ENCODE measurements at regions of chr12 and their contacts with region 1.

Region 1: DNA sequence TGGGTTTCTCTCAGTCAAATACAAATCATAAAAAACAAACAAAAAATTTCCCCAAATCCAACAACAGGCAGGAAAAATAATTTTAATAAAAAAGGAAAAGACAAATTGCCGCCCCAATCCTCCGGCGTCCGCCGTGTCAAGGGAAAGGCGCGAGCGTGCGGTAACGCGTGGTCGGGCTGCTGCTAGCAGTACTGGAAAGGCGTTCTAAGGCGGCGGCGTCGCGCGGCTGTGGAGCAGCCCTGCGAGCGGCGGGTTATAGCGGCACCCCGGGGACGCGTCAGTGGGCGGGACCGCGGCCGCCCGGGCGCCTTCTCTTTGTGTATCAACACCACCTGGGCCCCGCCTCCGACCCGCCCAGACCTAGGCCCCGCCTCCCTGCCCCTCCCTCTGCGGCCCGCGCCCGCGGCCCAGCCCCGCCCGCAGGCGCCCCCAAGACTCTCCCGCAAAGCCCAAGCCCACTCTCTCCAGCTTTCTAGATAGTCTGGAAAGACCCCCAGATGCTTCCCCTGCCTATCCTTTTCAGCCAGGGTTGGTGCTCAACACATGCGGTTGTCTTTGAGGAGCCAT is at the start of gene SLC38A2:
- DNase-seq: peak; percentile 97
- ATAC-seq: peak; percentile 81 to 96 (median 81)
- H3K4me3 ChIP-seq: peak within 1 kb of the TSS; percentile 100
- H3K4me3 Mint-ChIP-seq: peak within 1 kb of the TSS; percentile 100
- H3K27ac ChIP-seq: peak within 1 kb of the TSS; percentile 96
- H3K27ac Mint-ChIP-seq: peak within 1 kb of the TSS; percentile 99
- H3K4me1 ChIP-seq: peaks cover 27% of the 10 kb centered on the region
- H3K4me1 Mint-ChIP-seq: peaks cover 65 to 66% of the 10 kb centered on the region in 2 donors
- H3K27me3 ChIP-seq: no peaks in the 10 kb centered on the region
- H3K27me3 Mint-ChIP-seq: no peaks in the 10 kb centered on the region
- CTCF ChIP-seq: no peak
- total RNA-seq, gene SLC38A2: 131 to 241 (median 167) TPM

Region 2: GRCh38 chr12:45728630-45729232 is 643.9 kb before region 1 on chr12:
- intact Hi-C with region 1: loop called (anchors 5 kb)
- DNase-seq: peak; percentile 96 to 98
- ATAC-seq: peak; percentile 67 to 89 (median 72)
- H3K4me3 ChIP-seq: peak overlapping the region; percentile 88
- H3K4me3 Mint-ChIP-seq: peak overlapping the region; percentile 100
- H3K27ac ChIP-seq: peak overlapping the region; percentile 96
- H3K27ac Mint-ChIP-seq: peak overlapping the region; percentile 100
- H3K4me1 ChIP-seq: peaks cover 10% of the 10 kb centered on the region
- H3K4me1 Mint-ChIP-seq: peaks cover 50 to 61% of the 10 kb centered on the region in 2 donors
- H3K27me3 ChIP-seq: no peaks in the 10 kb centered on the region
- H3K27me3 Mint-ChIP-seq: no peaks in the 10 kb centered on the region
- CTCF ChIP-seq: peak; percentile 88

Region 3: GRCh38 chr12:46217541-46218321 is 154.9 kb before region 1 on chr12:
- intact Hi-C with region 1: loop called (anchors 1 kb)
- DNase-seq: peak; percentile 57 to 85
- ATAC-seq: peak; percentile 11 to 55 (median 32)
- H3K4me3 ChIP-seq: peak overlapping the region; percentile 8
- H3K4me3 Mint-ChIP-seq: peak overlapping the region; percentile 85
- H3K27ac ChIP-seq: peak overlapping the region; percentile 87
- H3K27ac Mint-ChIP-seq: peak overlapping the region; percentile 97 to 98
- H3K4me1 ChIP-seq: peaks cover 54% of the 10 kb centered on the region
- H3K4me1 Mint-ChIP-seq: peaks cover 90 to 97% of the 10 kb centered on the region in 2 donors
- H3K27me3 ChIP-seq: no peaks in the 10 kb centered on the region
- H3K27me3 Mint-ChIP-seq: no peaks in the 10 kb centered on the region
- CTCF ChIP-seq: no peak

Region 4: DNA sequence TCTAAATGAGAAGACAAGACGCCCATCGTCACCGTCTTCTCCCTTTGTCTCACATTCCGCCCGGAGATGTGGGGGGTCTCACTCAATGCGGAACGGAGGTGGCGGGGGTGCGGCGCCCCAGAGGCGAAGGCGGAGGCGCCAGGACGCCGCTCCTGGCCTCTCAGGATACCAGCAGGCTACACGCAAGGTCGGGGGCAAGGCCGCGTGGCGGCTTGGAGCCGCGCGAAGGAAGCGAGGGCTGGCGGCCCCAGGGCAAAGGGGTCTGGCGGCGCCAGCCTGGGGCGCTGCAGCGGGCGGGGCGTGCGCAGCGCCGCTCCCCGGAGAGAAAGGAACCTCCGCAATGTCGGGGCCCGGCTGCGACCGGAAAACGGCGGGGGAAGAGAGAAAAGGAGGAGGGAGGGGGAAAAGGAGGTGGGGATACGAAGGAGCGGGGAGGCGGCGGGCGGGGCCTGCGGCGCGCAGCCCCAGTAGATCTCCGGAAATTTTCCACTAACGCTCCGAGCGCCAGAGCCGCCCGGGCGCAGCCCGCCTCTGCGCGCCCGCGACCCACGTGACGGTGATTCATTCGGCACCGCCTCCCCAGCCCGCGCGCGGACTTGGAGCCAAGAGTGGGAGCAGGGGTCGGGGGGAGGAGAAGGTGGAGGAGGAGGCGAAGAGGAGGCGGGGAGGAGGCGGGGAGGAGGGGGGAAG is 10.5 kb after region 1 on chr12:
- intact Hi-C with region 1: loop called (anchors 1 kb)
- DNase-seq: peak; percentile 86 to 96
- ATAC-seq: peak; percentile 80 to 91 (median 88)
- H3K4me3 ChIP-seq: peak overlapping the region; percentile 96
- H3K4me3 Mint-ChIP-seq: peak overlapping the region; percentile 90
- H3K27ac ChIP-seq: peak overlapping the region; percentile 97
- H3K27ac Mint-ChIP-seq: peak overlapping the region; percentile 91 to 96
- H3K4me1 ChIP-seq: peaks cover 29% of the 10 kb centered on the region
- H3K4me1 Mint-ChIP-seq: peaks cover 35 to 37% of the 10 kb centered on the region in 2 donors
- H3K27me3 ChIP-seq: no peaks in the 10 kb centered on the region
- H3K27me3 Mint-ChIP-seq: no peaks in the 10 kb centered on the region
- CTCF ChIP-seq: no peak

Region 5: GRCh38 chr12:46473634-46474329 is 101.2 kb after region 1 on chr12:
- intact Hi-C with region 1: loop called (anchors 1 kb)
- DNase-seq: no peak
- ATAC-seq: peak in 2 of 3 donors; percentile 7 to 49
- H3K4me3 ChIP-seq: no peak overlapping the region
- H3K4me3 Mint-ChIP-seq: peak overlapping the region; percentile 53
- H3K27ac ChIP-seq: peak overlapping the region; percentile 39
- H3K27ac Mint-ChIP-seq: peak overlapping the region; percentile 77 to 87
- H3K4me1 ChIP-seq: peaks cover 18% of the 10 kb centered on the region
- H3K4me1 Mint-ChIP-seq: peaks cover 51 to 54% of the 10 kb centered on the region in 2 donors
- H3K27me3 ChIP-seq: no peaks in the 10 kb centered on the region
- H3K27me3 Mint-ChIP-seq: no peaks in the 10 kb centered on the region
- CTCF ChIP-seq: no peak

Region 6: DNA sequence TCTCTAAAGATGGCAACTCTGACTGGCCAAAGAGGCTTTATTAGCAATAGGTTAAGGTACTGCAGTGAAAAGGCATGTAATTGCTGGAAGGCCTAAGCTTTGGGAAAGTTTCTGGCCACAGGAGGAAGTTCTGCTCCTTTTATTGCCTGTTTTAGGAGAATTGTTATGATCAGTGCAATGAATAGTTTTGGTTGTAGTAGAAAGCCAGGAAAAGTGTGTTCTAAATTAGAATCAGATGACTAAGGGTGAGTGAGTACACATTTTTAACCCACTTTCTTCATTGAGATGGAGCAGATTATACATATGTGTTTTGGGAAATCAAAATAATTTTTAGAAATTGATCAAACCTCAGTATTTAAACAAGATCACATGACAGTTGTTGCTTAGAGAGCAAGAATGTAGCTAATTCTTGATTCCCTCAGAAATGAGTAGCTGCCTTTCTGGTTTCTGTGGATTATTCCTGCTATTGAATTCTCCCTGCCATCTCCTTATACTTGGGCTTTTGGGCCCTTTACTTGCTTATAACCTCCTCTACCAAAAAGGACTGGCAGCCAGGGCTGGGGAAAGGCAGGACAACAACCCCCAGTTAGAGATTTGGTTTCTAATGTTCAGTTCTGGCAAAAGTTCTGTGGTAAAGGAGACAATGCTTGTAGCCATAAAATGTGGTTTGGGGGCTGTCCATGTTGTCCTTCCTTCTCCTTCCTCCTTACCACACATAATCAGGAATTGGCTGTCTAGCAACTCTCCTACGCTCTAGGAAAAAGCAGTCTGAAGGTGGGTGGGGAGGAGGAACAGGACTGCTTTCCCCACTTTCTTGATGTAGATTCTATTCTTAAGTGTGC is 236.0 kb after region 1 on chr12:
- intact Hi-C with region 1: loop called (anchors 5 kb)
- DNase-seq: no peak
- ATAC-seq: peak in 1 of 3 donors; percentile 5
- H3K4me3 ChIP-seq: no peak overlapping the region
- H3K4me3 Mint-ChIP-seq: peak overlapping the region; percentile 92
- H3K27ac ChIP-seq: peak overlapping the region; percentile 7
- H3K27ac Mint-ChIP-seq: peak overlapping the region; percentile 51 to 92
- H3K4me1 ChIP-seq: peaks cover 31% of the 10 kb centered on the region
- H3K4me1 Mint-ChIP-seq: peaks cover 63 to 65% of the 10 kb centered on the region in 2 donors
- H3K27me3 ChIP-seq: no peaks in the 10 kb centered on the region
- H3K27me3 Mint-ChIP-seq: no peaks in the 10 kb centered on the region
- CTCF ChIP-seq: no peak

Region 7: DNA sequence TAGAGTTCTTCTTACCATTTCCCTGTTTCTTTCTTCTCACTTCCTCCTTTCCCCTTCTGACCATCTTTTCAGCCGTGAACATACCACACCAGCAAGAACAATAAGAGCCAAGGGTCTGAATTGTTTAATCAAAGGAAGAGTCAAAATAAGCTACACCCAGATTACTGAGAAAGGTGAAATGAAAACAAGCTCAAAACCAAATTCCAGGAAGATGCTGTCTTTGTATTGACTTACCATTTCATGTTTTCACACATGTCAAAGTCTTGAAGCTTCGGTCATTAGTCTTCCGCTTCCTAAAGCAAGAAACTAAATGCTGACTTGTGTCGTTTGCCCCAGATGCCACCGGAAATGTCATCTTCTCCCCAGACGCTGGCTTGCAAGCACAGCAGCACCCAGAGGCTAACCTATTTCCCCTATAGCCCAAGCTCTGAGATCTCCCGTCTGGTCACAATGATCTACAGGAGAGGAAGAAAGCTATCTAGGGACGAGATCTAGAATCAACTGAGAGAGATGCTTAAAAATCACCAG is 843.6 kb after region 1 on chr12:
- intact Hi-C with region 1: loop called (anchors 10 kb)
- DNase-seq: peak; percentile 62 to 88
- ATAC-seq: peak; percentile 74 to 90 (median 86)
- H3K4me3 ChIP-seq: peak overlapping the region; percentile 69
- H3K4me3 Mint-ChIP-seq: peak overlapping the region; percentile 96
- H3K27ac ChIP-seq: peak overlapping the region; percentile 87
- H3K27ac Mint-ChIP-seq: peak overlapping the region; percentile 97 to 99
- H3K4me1 ChIP-seq: peaks cover 56% of the 10 kb centered on the region
- H3K4me1 Mint-ChIP-seq: peaks cover 74 to 79% of the 10 kb centered on the region in 2 donors
- H3K27me3 ChIP-seq: no peaks in the 10 kb centered on the region
- H3K27me3 Mint-ChIP-seq: no peaks in the 10 kb centered on the region
- CTCF ChIP-seq: no peak